ENCODE measurements at regions of chrX and their contacts with region 1.

Region 1: GRCh38 chrX:23907498-23908218 is at the starts of genes APOO and CXorf58:
- DNase-seq: peak; percentile 85 to 95
- ATAC-seq: peak; percentile 90 to 97 (median 90)
- H3K4me3 ChIP-seq: peak within 1 kb of the TSS; percentile 56
- H3K4me3 Mint-ChIP-seq: peak within 1 kb of the TSS; percentile 84
- H3K27ac ChIP-seq: peak within 1 kb of the TSS; percentile 94
- H3K27ac Mint-ChIP-seq: peak within 1 kb of the TSS; percentile 84 to 88
- H3K4me1 ChIP-seq: peaks cover 10% of the 10 kb centered on the region
- H3K4me1 Mint-ChIP-seq: peaks cover 6 to 7% of the 10 kb centered on the region in 2 donors
- H3K27me3 ChIP-seq: no peaks in the 10 kb centered on the region
- H3K27me3 Mint-ChIP-seq: no peaks in the 10 kb centered on the region
- CTCF ChIP-seq: peak; percentile 69
- total RNA-seq, gene APOO: 8.8 to 13.0 (median 10.0) TPM
- total RNA-seq, gene CXorf58: not detected

Region 2: GRCh38 chrX:23952984-23953907 is 45.6 kb after region 1 on chrX:
- intact Hi-C with region 1: loop called (anchors 1 kb)
- DNase-seq: peak; percentile 26 to 66
- ATAC-seq: peak; percentile 85 to 88 (median 86)
- H3K4me3 ChIP-seq: peak overlapping the region; percentile 27
- H3K4me3 Mint-ChIP-seq: peak overlapping the region; percentile 93
- H3K27ac ChIP-seq: peak overlapping the region; percentile 82
- H3K27ac Mint-ChIP-seq: peak overlapping the region; percentile 91 to 92
- H3K4me1 ChIP-seq: peaks cover 9% of the 10 kb centered on the region
- H3K4me1 Mint-ChIP-seq: peaks cover 14 to 16% of the 10 kb centered on the region in 2 donors
- H3K27me3 ChIP-seq: no peaks in the 10 kb centered on the region
- H3K27me3 Mint-ChIP-seq: no peaks in the 10 kb centered on the region
- CTCF ChIP-seq: no peak

Region 3: GRCh38 chrX:24024819-24025740 is 117.4 kb after region 1 on chrX:
- intact Hi-C with region 1: loop called (anchors 1 kb)
- DNase-seq: peak; percentile 76 to 88
- ATAC-seq: peak; percentile 91 to 97 (median 91)
- H3K4me3 ChIP-seq: peak overlapping the region; percentile 88
- H3K4me3 Mint-ChIP-seq: peak overlapping the region; percentile 93
- H3K27ac ChIP-seq: peak overlapping the region; percentile 94
- H3K27ac Mint-ChIP-seq: peak overlapping the region; percentile 83 to 87
- H3K4me1 ChIP-seq: peaks cover 2% of the 10 kb centered on the region
- H3K4me1 Mint-ChIP-seq: peaks cover 21 to 27% of the 10 kb centered on the region in 2 donors
- H3K27me3 ChIP-seq: no peaks in the 10 kb centered on the region
- H3K27me3 Mint-ChIP-seq: no peaks in the 10 kb centered on the region
- CTCF ChIP-seq: no peak

Region 4: GRCh38 chrX:24150051-24150790 is 242.6 kb after region 1 on chrX:
- intact Hi-C with region 1: loop called (anchors 5 kb)
- DNase-seq: peak; percentile 71 to 91
- ATAC-seq: peak; percentile 73 to 89 (median 78)
- H3K4me3 ChIP-seq: peak overlapping the region; percentile 68
- H3K4me3 Mint-ChIP-seq: peak overlapping the region; percentile 96
- H3K27ac ChIP-seq: peak overlapping the region; percentile 94
- H3K27ac Mint-ChIP-seq: peak overlapping the region; percentile 83 to 93
- H3K4me1 ChIP-seq: peaks cover 24% of the 10 kb centered on the region
- H3K4me1 Mint-ChIP-seq: peaks cover 33 to 58% of the 10 kb centered on the region in 2 donors
- H3K27me3 ChIP-seq: no peaks in the 10 kb centered on the region
- H3K27me3 Mint-ChIP-seq: no peaks in the 10 kb centered on the region
- CTCF ChIP-seq: peak; percentile 16

Region 5: DNA sequence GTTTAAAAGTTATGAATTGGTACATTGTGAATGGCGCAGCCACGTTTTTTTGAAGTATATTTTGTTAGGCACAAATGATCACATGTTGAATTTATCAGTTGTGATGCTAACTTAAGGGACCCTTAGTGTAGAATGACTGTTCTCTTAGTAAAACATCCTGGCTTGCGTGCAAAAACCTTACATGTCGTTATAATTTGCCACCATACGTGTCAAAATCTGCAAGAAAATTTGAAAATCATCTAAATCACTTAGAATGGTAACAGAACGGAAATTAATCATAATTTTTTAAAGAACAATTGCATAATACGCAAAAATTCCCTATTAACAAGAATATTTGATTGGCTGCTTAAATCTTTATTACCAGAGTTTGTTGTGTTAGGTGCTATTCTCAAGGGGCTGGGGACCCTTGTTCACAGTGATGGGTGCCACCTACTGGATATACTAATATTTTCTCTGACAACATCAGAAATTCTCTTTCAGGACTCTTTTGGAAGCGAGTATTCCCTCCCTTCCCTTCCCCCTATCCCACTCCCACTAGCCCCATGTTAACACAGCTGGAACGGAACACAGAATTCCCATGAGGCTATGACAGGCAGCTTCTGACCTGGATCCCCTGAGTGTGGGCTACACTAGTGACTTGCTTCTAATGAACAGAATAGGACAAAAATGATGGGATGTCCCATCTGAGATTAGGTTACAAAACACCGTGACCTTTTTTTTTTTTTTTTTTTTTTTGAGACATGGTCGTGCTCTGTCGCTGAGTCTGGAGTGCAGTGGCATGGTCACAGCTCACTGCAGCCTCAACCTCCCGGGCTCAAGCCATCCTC is 334.4 kb after region 1 on chrX:
- intact Hi-C with region 1: loop called (anchors 10 kb)
- DNase-seq: peak in 1 of 2 donors; percentile 52
- ATAC-seq: peak in 1 of 3 donors; percentile 34
- H3K4me3 ChIP-seq: no peak overlapping the region
- H3K4me3 Mint-ChIP-seq: no peak overlapping the region
- H3K27ac ChIP-seq: no peak overlapping the region
- H3K27ac Mint-ChIP-seq: no peak overlapping the region
- H3K4me1 ChIP-seq: no peaks in the 10 kb centered on the region
- H3K4me1 Mint-ChIP-seq: no peaks in the 10 kb centered on the region
- H3K27me3 ChIP-seq: no peaks in the 10 kb centered on the region
- H3K27me3 Mint-ChIP-seq: peaks cover 3 to 14% of the 10 kb centered on the region in 2 donors
- CTCF ChIP-seq: peak; percentile 20

Region 6: GRCh38 chrX:24426391-24426790 is 518.7 kb after region 1 on chrX:
- intact Hi-C with region 1: no loop called
- DNase-seq: peak in 1 of 2 donors; percentile 47
- ATAC-seq: peak in 2 of 3 donors; percentile 55 to 74
- H3K4me3 ChIP-seq: no peak overlapping the region
- H3K4me3 Mint-ChIP-seq: peak overlapping the region; percentile 15
- H3K27ac ChIP-seq: peak overlapping the region; percentile 30
- H3K27ac Mint-ChIP-seq: peak overlapping the region in 1 of 2 donors; percentile 35
- H3K4me1 ChIP-seq: peaks cover 14% of the 10 kb centered on the region
- H3K4me1 Mint-ChIP-seq: peaks cover 9 to 12% of the 10 kb centered on the region in 2 donors
- H3K27me3 ChIP-seq: no peaks in the 10 kb centered on the region
- H3K27me3 Mint-ChIP-seq: no peaks in the 10 kb centered on the region
- CTCF ChIP-seq: no peak